Lower leg skin (tissue), 4 donors: ENCODE measurements at regions of chr1 and their contacts with region 1.

Region 1: DNA sequence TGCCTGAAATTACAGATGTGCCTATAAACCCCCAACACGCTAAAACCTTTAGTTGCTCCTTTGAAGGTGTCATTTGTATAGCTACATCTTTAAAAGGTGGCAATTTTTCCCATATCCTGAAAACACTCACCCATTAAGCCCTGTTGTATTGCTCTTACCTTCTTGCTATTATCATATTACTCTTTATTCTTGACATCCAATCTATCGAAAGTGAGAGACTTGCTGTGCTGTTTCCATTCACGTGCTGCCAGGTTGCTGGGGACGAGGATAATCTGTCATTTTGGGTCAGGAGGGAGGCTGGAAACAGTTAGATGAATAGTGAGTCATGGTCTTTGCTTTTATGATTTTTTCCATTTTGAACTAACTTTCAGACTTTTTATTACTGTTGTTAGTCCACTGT is 213.0 kb upstream of the PRMT6 start:
- DNase-seq: no peak
- H3K4me3 ChIP-seq: no peak overlapping the region
- CTCF ChIP-seq: no peak
- POLR2A ChIP-seq: no peak

Region 2: GRCh38 chr1:108590957-108591356 is 1747.4 kb after region 1 on chr1:
- intact Hi-C with region 1: loop called (anchors 5 kb)
- DNase-seq: no peak
- H3K4me3 ChIP-seq: no peak overlapping the region
- CTCF ChIP-seq: no peak
- POLR2A ChIP-seq: no peak